Endothelial cell of umbilical vein (primary cell): ENCODE measurements at regions of chr1 and their contacts with region 1.

Region 1: GRCh38 chr1:7752512-7753417 is 18.3 kb upstream of the VAMP3 start:
- DNase-seq: peak; percentile 72
- H3K4me3 ChIP-seq: peak overlapping the region in 2 of 3 experiments; percentile 18 to 25
- H3K27ac ChIP-seq: no peak overlapping the region
- H3K4me1 ChIP-seq: no peaks in the 10 kb centered on the region
- H3K27me3 ChIP-seq: no peaks in the 10 kb centered on the region
- CTCF ChIP-seq: peak; percentile 68 to 77
- POLR2A ChIP-seq: no peak

Region 2: GRCh38 chr1:7659514-7659913 is 93.3 kb before region 1 on chr1:
- CTCF ChIA-PET with region 1: interaction called, 674 read pairs
- POLR2A ChIA-PET with region 1: no interaction called
- dilution Hi-C with region 1: no loop called
- intact Hi-C with region 1: no loop called
- DNase-seq: no peak
- H3K4me3 ChIP-seq: no peak overlapping the region
- H3K27ac ChIP-seq: no peak overlapping the region
- H3K4me1 ChIP-seq: no peaks in the 10 kb centered on the region
- H3K27me3 ChIP-seq: no peaks in the 10 kb centered on the region
- CTCF ChIP-seq: no peak
- POLR2A ChIP-seq: no peak

Region 3: GRCh38 chr1:7680207-7680954 is 72.4 kb before region 1 on chr1:
- CTCF ChIA-PET with region 1: interaction called, 48 read pairs
- POLR2A ChIA-PET with region 1: no interaction called
- dilution Hi-C with region 1: no loop called
- intact Hi-C with region 1: no loop called
- DNase-seq: peak; percentile 30
- H3K4me3 ChIP-seq: peak overlapping the region; percentile 5 to 69 (median 47)
- H3K27ac ChIP-seq: no peak overlapping the region
- H3K4me1 ChIP-seq: no peaks in the 10 kb centered on the region
- H3K27me3 ChIP-seq: no peaks in the 10 kb centered on the region
- CTCF ChIP-seq: no peak
- POLR2A ChIP-seq: peak; percentile 55

Region 4: DNA sequence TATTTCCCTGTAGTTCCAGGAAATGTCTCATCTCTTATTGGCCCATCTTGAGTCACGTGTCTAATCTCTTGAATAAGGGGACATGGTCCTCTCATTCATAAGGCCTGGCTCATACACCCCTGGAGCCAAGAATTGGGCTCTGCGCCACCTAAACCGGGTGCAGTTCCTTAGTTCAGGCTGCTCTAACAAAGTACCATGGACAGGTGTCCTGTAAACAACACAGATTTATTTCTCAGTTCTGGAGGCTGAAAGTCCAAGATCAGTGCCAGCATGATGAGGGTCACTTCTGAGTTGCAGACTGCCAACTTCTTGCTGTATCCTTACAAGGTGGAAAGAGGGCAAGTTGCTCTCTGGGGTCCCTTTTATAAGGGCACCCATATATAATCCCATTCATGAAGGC is 41.9 kb before region 1 on chr1:
- CTCF ChIA-PET with region 1: interaction called, 12 read pairs
- POLR2A ChIA-PET with region 1: no interaction called
- dilution Hi-C with region 1: no loop called
- intact Hi-C with region 1: no loop called
- DNase-seq: no peak
- H3K4me3 ChIP-seq: no peak overlapping the region
- H3K27ac ChIP-seq: no peak overlapping the region
- H3K4me1 ChIP-seq: no peaks in the 10 kb centered on the region
- H3K27me3 ChIP-seq: peaks cover under 1 to 3% of the 10 kb centered on the region in 2 experiments
- CTCF ChIP-seq: no peak
- POLR2A ChIP-seq: no peak

Region 5: GRCh38 chr1:7770997-7771822 is 18.4 kb after region 1 on chr1 and contains the start of gene VAMP3:
- CTCF ChIA-PET with region 1: interaction called, 12 read pairs
- POLR2A ChIA-PET with region 1: no interaction called
- dilution Hi-C with region 1: no loop called
- intact Hi-C with region 1: no loop called
- DNase-seq: peak; percentile 83
- H3K4me3 ChIP-seq: peak within 1 kb of the TSS; percentile 86 to 99 (median 96)
- H3K27ac ChIP-seq: peak within 1 kb of the TSS; percentile 74
- H3K4me1 ChIP-seq: peaks cover 12% of the 10 kb centered on the region
- H3K27me3 ChIP-seq: no peaks in the 10 kb centered on the region
- CTCF ChIP-seq: no peak
- POLR2A ChIP-seq: peak; percentile 70
- total RNA-seq, gene VAMP3: 137 and 148 TPM in 2 replicates